ENCODE measurements at regions of chr2 and their contacts with region 1.

Region 1: DNA sequence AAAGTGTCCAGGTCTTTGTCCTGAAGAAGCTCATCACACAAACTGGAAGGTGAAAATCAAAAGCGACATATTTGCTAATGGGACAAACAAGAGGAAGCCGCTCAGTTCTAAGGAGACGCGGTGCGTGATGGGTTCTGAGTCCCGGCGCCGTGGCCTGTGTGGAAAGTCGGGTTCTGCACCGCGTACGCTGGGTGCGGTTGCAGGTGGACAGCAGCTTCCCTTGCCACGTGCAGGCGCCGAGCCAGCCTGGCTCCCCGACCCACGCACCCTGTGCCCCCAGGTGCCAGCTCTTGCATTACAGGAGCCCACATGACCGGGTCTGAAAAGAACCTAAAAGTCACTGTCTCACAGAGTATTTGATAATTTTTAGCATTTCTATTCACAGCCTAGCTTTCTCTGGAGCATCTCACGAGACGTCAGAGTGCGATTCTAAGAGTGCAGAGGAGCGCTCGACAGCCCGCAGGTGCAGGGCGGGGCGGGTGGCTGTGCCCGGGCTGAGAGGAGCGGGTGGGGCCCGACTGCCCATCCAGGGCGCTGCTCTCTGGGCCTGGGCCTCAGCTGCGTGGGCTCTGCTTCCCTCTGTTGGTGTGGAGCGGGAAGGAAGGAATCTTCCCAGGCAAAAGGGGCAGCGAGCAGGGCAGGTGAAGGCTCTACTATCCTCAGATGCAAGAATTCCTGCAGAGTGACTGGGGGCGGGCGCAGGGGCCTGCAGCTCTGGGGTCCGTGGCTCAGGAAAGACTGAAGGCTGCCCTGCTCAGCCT is 39.4 kb downstream of the MYT1L start:
- DNase-seq: peak in 3 of 10 donors; percentile 27 to 89 (median 66)
- H3K4me3 ChIP-seq: peak overlapping the region in 5 of 59 donors; percentile 8 to 20 (median 16)
- H3K27ac ChIP-seq: peak overlapping the region in 50 of 59 donors; percentile 1 to 80 (median 52)
- H3K27me3 ChIP-seq: peaks cover 0 to 3% (median 0%) of the 10 kb centered on the region in 45 donors
- CTCF ChIP-seq: peak in 55 of 56 donors; percentile 22 to 76 (median 56)

Region 2: GRCh38 chr2:1886405-1886992 is 405.2 kb before region 1 on chr2:
- intact Hi-C with region 1: loop called in 1 of 2 experiments (anchors 10 kb)
- DNase-seq: peak in 9 of 10 donors; percentile 68 to 86 (median 76)
- H3K4me3 ChIP-seq: no peak overlapping the region
- H3K27ac ChIP-seq: no peak overlapping the region
- H3K27me3 ChIP-seq: peaks cover 0 to 6% (median 0%) of the 10 kb centered on the region in 45 donors
- CTCF ChIP-seq: peak; percentile 46 to 86 (median 74)

Region 3: GRCh38 chr2:2121887-2122286 is 169.8 kb before region 1 on chr2:
- intact Hi-C with region 1: loop called in 1 of 2 experiments (anchors 5 kb)
- DNase-seq: peak in 4 of 10 donors; percentile 56 to 73 (median 64)
- H3K4me3 ChIP-seq: no peak overlapping the region
- H3K27ac ChIP-seq: no peak overlapping the region
- H3K27me3 ChIP-seq: no peaks in the 10 kb centered on the region
- CTCF ChIP-seq: no peak

Region 4: DNA sequence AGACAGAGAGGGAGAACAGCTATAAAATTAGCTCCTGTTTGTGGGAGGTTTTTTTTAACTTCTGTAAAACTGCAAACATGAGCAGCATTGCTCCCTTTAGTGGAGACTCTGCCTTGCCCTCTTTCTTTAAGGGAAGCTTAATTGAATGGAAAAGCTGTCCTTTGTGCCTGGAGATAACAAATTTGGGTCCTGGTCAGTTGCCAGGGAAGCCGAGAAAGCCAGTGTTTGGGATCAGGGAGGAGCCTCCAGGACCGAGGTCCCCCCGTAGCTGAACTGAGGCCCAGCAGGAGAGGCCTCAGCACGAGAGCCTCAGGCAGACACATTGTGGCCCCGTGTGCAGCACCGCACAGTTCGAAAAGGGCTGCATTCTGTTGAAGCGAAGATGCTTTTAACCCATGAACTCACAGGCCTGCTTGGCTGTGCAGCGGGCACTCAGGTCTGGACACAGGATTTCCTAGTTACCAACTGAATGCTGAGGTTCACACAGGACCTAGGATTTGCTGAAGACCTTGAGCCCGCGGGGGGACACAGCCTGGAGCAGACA is 1781.4 kb after region 1 on chr2:
- intact Hi-C with region 1: no loop called
- DNase-seq: no peak
- H3K4me3 ChIP-seq: no peak overlapping the region
- H3K27ac ChIP-seq: no peak overlapping the region
- H3K27me3 ChIP-seq: peaks cover 0 to 5% (median 0%) of the 10 kb centered on the region in 45 donors
- CTCF ChIP-seq: no peak

Measured in dorsolateral prefrontal cortex (tissue), 120 donors.